Left ventricle myocardium superior (tissue), 1 donor: ENCODE measurements at regions of chr12 and their contacts with region 1.

Region 1: DNA sequence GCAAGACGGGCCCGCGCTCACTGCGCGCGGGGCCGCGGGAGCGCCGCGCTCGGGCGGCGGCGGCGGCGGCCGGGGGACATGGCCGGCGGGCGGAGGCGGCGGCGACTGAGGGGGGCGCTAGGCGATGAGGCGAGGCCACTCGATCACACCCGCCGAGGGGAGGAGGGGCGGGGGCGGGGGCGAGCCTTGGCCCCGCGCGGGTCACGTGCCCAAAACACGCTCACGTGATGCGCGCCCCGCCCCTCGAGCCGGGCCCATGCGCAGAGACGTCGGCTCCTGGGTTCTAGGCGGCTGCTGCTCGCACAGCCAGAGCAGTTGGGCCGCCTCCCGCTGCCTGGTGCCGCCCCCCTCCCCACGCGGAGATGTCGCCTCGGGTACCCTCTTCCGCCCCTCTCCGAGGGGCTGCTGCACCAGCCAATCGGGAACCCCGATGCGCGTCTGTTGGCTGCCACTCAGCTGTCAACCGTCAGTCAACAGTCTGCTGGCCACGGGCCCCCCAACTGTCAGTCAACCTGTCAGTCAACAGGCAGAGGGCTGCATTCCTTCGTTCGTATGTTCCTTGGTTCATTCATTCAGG is at the start of gene SPPL3:
- DNase-seq: peak; percentile 97
- ATAC-seq: peak; percentile 93
- total RNA-seq, gene SPPL3: 34.6 TPM

Region 2: GRCh38 chr12:120580787-120581723 is 323.2 kb before region 1 on chr12 and contains the start of gene POP5:
- intact Hi-C with region 1: no loop called
- DNase-seq: peak; percentile 97
- ATAC-seq: peak; percentile 91
- total RNA-seq, gene POP5: 34.0 TPM

Region 3: DNA sequence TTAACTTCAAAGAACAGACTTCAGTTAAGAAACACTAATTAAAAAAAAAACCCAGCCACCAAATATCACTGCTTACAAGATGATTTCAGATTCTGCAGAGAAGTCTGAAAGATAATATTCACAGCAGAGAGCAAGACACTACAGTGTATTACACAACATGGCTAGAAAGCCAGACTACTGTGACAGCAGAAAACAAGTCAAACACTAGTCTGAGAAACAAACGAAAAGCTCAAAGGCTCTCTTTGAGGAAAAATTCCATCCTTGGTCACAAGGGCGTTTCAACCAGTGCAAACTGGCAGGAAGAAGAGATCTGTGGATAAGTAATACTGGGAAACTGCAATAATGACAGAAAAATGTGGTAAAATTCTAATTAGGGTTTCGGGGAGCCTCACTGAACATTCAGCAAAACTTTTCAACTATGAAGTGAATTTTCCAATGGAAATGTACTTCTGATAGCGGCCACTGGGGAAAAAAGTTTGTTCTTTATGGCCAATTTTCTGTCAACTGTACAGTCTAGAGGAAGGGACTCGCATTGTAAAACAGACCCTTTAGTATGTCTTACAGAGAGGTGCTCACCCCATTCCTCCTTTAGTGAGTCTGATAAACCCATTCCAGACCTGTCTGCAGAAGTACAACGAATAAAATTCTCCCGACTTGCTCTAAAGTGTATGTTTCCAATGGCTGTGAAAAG is 128.3 kb before region 1 on chr12:
- intact Hi-C with region 1: loop called (anchors 10 kb)
- DNase-seq: no peak
- ATAC-seq: peak; percentile 53

Region 4: GRCh38 chr12:120856980-120857379 is 47.3 kb before region 1 on chr12:
- intact Hi-C with region 1: no loop called
- DNase-seq: no peak
- ATAC-seq: peak; percentile 31